ENCODE measurements at regions of chr10 and their contacts with region 1.

Region 1: DNA sequence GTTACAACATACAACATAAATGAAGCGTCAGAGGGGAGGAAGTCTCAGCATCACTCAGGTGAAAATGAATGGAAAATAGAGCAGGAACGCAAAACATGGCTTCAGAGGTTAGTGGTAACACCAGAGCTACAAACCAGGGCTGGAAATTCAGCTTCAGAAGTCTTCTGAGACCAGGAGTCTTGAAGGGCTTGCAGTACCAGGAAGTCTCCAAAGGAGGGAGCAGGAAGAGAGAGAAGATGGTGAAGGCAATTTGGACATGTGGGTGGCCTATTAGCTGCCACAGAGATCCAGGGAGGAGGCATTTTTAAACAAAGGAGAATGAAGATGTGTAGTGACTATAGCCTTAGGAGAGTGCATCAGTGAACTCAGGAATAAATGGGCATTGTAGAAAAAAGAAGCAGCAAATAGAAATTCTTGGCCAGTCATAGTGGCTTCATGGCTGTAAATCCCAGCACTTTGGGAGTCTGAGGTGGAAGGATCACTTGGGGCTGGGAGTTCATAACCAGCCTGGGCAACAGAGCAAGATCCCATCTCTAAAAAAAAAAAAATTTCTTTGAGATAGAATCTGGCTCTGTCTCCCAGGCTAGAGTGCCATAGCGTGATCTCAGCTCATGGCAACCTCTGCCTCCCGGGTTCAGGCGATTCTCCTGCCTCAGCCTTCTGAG is 9.3 kb upstream of the TET1 start:
- DNase-seq: peak; percentile 59 to 65
- H3K4me3 ChIP-seq: no peak overlapping the region
- H3K27ac ChIP-seq: no peak overlapping the region
- H3K4me1 ChIP-seq: peaks cover 0 to 4% (median 2%) of the 10 kb centered on the region in 4 experiments; a peak in 1 of 7 replicates
- H3K27me3 ChIP-seq: no peaks in the 10 kb centered on the region
- CTCF ChIP-seq: peak; percentile 19 to 87 (median 59)
- EP300 ChIP-seq: no peak
- POLR2A ChIP-seq: no peak
- RAD21 ChIP-seq: peak; percentile 70 to 78

Region 2: GRCh38 chr10:68301790-68302502 is 248.9 kb before region 1 on chr10:
- CTCF ChIA-PET with region 1: no interaction called
- POLR2A ChIA-PET with region 1: no interaction called
- DNase-seq: no peak
- H3K4me3 ChIP-seq: no peak overlapping the region
- H3K27ac ChIP-seq: no peak overlapping the region
- H3K4me1 ChIP-seq: peaks cover 0 to 3% (median 0%) of the 10 kb centered on the region in 4 experiments; a peak in 1 of 7 replicates
- H3K27me3 ChIP-seq: no peaks in the 10 kb centered on the region
- CTCF ChIP-seq: peak in 2 of 3 experiments; percentile 37 to 48; a peak in 2 of 4 replicates
- EP300 ChIP-seq: no peak
- POLR2A ChIP-seq: no peak
- RAD21 ChIP-seq: peak; percentile 64 to 67

Region 3: DNA sequence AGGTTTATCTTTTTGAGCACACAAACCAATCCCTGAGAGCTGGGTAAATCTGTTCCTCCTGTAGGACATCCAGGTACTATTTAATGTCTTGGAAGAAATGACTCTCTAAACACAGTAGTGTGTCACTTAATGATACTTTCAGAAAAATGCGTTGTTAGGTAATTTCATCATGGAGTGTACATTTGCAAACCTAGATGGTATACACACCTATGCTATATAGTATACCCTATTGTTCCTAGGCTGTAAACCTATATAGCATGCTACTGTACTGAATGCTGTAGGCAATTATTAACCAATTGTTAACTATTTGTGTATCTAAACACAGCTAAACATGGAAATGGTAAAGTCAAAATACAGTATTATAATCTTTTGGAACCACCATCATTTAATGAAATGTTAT is 153.9 kb before region 1 on chr10:
- CTCF ChIA-PET with region 1: no interaction called
- POLR2A ChIA-PET with region 1: no interaction called
- DNase-seq: no peak
- H3K4me3 ChIP-seq: no peak overlapping the region
- H3K27ac ChIP-seq: no peak overlapping the region
- H3K4me1 ChIP-seq: no peaks in the 10 kb centered on the region
- H3K27me3 ChIP-seq: no peaks in the 10 kb centered on the region
- CTCF ChIP-seq: no peak
- EP300 ChIP-seq: no peak
- POLR2A ChIP-seq: no peak
- RAD21 ChIP-seq: no peak

Region 4: DNA sequence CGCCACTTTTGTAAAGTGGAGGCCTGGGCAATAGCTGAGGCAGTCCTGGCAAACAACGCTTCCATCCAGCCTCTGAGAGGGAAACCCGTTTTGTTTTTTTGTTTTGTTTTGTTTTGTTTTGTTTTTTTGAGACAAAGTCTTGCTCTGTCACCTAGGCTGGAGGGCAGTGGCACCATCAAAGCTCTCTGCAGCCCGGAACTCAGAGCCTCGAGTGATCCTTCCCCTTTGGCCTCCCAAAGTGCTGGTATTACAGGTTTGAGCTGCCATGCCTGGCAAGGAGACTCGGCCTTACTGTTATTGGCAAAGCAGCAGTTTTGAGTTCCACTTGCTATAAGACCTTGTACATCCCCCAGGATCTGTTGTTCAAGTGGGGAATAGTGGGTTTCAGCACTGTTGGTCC is 13.1 kb before region 1 on chr10:
- CTCF ChIA-PET with region 1: interaction called, 55 read pairs
- POLR2A ChIA-PET with region 1: interaction called, 5 read pairs
- DNase-seq: no peak
- H3K4me3 ChIP-seq: no peak overlapping the region
- H3K27ac ChIP-seq: no peak overlapping the region
- H3K4me1 ChIP-seq: no peaks in the 10 kb centered on the region
- H3K27me3 ChIP-seq: no peaks in the 10 kb centered on the region
- CTCF ChIP-seq: no peak
- EP300 ChIP-seq: no peak
- POLR2A ChIP-seq: no peak
- RAD21 ChIP-seq: no peak

Region 5: GRCh38 chr10:68566955-68567354 is 16.1 kb after region 1 on chr10:
- CTCF ChIA-PET with region 1: interaction called, 11 read pairs
- POLR2A ChIA-PET with region 1: interaction called, 14 read pairs
- DNase-seq: no peak
- H3K4me3 ChIP-seq: no peak overlapping the region
- H3K27ac ChIP-seq: no peak overlapping the region
- H3K4me1 ChIP-seq: peaks cover 0 to 20% (median 8%) of the 10 kb centered on the region in 4 experiments; a peak in 6 of 7 replicates
- H3K27me3 ChIP-seq: no peaks in the 10 kb centered on the region
- CTCF ChIP-seq: no peak
- EP300 ChIP-seq: no peak
- POLR2A ChIP-seq: no peak
- RAD21 ChIP-seq: no peak

Region 6: GRCh38 chr10:68600041-68600778 is 49.3 kb after region 1 on chr10:
- CTCF ChIA-PET with region 1: interaction called, 11 read pairs
- POLR2A ChIA-PET with region 1: interaction called, 14 read pairs
- DNase-seq: peak; percentile 82 to 86
- H3K4me3 ChIP-seq: peak overlapping the region; percentile 21 to 51 (median 34); a peak in 7 of 8 replicates
- H3K27ac ChIP-seq: peak overlapping the region; percentile 65
- H3K4me1 ChIP-seq: peaks cover 8 to 20% (median 13%) of the 10 kb centered on the region in 4 experiments
- H3K27me3 ChIP-seq: no peaks in the 10 kb centered on the region
- CTCF ChIP-seq: no peak
- EP300 ChIP-seq: peak in 1 of 2 experiments; percentile 50; a peak in 1 of 3 replicates
- POLR2A ChIP-seq: peak; percentile 27 to 72
- RAD21 ChIP-seq: peak; percentile 13 to 27; a peak in 2 of 4 replicates

Region 7: DNA sequence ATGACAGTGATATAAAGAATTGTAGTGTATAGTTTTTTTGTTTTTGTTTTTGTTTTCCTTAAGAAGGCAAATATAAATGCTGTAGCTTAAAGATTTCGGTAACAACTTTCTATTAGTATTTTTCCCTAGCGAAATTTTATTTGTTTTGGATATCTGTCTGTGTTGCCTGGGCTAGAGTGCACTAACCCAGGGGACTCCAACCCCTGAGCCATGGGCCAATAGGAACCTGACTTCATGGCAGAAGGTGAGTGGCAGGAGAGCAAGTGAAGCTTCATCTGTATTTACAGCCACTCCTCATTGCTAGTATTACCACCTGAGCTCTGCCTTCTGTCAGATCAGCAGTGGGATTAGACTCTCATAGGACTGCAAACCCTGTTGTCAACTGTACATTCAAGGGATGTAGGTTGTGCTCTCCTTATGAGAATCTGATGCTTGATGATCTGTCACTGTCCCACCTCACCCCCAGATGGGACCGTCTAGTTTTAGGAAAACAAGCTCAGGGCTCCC is 104.8 kb after region 1 on chr10:
- CTCF ChIA-PET with region 1: no interaction called
- POLR2A ChIA-PET with region 1: no interaction called
- DNase-seq: no peak
- H3K4me3 ChIP-seq: no peak overlapping the region
- H3K27ac ChIP-seq: no peak overlapping the region
- H3K4me1 ChIP-seq: no peaks in the 10 kb centered on the region
- H3K27me3 ChIP-seq: no peaks in the 10 kb centered on the region
- CTCF ChIP-seq: no peak
- EP300 ChIP-seq: no peak
- POLR2A ChIP-seq: no peak
- RAD21 ChIP-seq: no peak

Measured in H1 (cell line).